ENCODE measurements at regions of chr3 and their contacts with region 1.

Region 1: GRCh38 chr3:5194341-5195159 is 7.0 kb downstream of the EDEM1 start:
- DNase-seq: peak; percentile 68
- ATAC-seq: peak; percentile 52
- H3K4me3 Mint-ChIP-seq: peak overlapping the region; percentile 28
- H3K27ac Mint-ChIP-seq: peak overlapping the region; percentile 93
- H3K4me1 Mint-ChIP-seq: peaks cover 80% of the 10 kb centered on the region
- H3K27me3 Mint-ChIP-seq: no peaks in the 10 kb centered on the region
- CTCF ChIP-seq: no peak

Region 2: DNA sequence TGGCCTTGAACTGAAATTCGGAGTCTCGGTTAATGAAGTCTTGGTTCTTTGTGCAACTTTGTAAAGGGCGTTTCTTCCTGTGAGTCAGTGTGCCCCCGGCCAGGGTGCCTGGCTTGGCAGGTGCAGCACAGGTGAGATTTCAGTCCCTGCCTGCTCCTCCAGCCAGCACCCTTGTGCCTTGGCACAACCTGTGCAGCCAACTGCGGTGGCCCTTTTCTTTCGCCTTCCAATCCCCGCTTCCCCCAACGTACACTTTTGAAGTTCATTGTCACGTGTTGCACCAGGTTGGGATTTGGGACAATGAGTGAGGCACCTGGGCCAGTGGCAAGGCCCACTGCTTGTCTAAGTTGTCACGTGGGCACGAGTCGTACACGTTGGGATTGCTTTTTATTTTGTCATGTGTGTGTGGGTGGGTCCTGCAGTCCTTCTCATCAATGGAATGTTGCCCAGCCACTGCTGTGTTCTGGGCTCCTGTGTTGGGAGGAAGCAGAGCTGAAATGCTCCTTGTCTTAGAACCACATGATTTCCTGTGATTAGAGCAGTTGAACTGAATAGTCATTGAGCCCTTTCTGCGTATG is 458.2 kb before region 1 on chr3:
- CTCF ChIA-PET with region 1: no interaction called
- POLR2A ChIA-PET with region 1: no interaction called
- intact Hi-C with region 1: loop called (anchors 10 kb)
- DNase-seq: no peak
- ATAC-seq: no peak
- H3K4me3 Mint-ChIP-seq: no peak overlapping the region
- H3K27ac Mint-ChIP-seq: peak overlapping the region; percentile 91
- H3K4me1 Mint-ChIP-seq: peaks cover 77% of the 10 kb centered on the region
- H3K27me3 Mint-ChIP-seq: no peaks in the 10 kb centered on the region
- CTCF ChIP-seq: no peak

Region 3: DNA sequence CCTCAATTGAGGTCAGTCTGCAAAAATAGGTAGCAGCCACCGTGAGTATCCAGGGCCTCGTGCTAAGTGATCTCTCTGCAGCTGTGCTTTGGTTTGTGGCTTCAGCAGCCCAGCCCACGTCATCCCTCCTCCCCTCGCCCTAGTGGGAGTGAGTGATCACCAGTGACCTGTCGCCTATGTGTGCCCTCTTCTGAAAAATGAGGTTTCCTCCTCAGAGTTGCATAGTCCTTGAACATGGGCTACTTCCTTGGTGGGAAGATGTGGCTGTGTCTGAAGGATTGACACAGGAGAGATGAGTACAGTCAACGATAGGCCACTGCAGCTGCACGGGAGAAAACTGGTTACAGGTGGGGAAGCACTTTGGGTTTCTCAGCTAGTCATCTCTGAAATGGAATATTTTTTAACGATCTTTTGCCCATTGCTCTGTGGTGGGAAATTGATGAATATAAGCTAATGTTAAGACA is 360.1 kb before region 1 on chr3:
- CTCF ChIA-PET with region 1: no interaction called
- POLR2A ChIA-PET with region 1: interaction called, 3 read pairs
- intact Hi-C with region 1: loop called (anchors 10 kb)
- DNase-seq: peak; percentile 95
- ATAC-seq: peak; percentile 48
- H3K4me3 Mint-ChIP-seq: peak overlapping the region; percentile 63
- H3K27ac Mint-ChIP-seq: peak overlapping the region; percentile 97
- H3K4me1 Mint-ChIP-seq: peaks cover 86% of the 10 kb centered on the region
- H3K27me3 Mint-ChIP-seq: no peaks in the 10 kb centered on the region
- CTCF ChIP-seq: no peak

Region 4: DNA sequence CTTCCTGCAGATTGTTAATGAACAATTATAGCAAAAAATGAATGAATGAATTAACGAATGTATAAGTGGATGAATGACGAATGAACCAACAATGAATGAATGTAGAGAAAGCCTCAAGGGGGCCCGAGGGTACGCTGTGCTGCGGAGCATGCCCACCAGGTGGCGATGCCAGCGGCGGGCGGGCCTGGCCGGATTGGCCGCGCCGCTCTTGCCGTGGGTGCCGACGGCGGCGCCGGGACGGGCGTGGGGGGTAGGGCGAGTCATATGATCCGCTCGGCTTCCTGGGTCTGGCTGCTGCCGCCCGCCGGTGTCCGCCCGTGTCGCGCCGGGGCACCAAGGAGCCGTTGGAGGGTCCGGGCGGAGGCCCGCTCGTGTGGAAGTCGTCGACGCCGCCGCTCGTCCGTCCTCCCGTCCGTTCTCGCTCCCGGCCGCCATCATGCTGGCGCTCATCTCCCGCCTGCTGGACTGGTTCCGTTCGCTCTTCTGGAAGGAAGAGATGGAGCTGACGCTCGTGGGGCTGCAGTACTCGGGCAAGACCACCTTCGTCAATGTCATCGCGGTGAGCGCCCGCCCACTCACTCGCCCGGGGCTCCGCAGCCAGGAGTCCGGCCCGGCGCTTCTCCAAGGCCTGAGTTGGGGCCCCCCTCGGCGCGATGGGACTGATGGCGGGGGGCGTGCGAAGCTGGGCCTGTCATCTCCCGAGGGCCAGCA is 72.4 kb before region 1 on chr3 and contains the start of gene ARL8B:
- CTCF ChIA-PET with region 1: interaction called, 5 read pairs
- POLR2A ChIA-PET with region 1: interaction called, 36 read pairs
- intact Hi-C with region 1: loop called (anchors 5 kb)
- DNase-seq: peak; percentile 95
- ATAC-seq: peak; percentile 97
- H3K4me3 Mint-ChIP-seq: peak within 1 kb of the TSS; percentile 86
- H3K27ac Mint-ChIP-seq: peak within 1 kb of the TSS; percentile 92
- H3K4me1 Mint-ChIP-seq: peaks cover 41% of the 10 kb centered on the region
- H3K27me3 Mint-ChIP-seq: no peaks in the 10 kb centered on the region
- CTCF ChIP-seq: peak; percentile 95
- total RNA-seq, gene ARL8B: 33.9 to 38.9 TPM

Region 5: DNA sequence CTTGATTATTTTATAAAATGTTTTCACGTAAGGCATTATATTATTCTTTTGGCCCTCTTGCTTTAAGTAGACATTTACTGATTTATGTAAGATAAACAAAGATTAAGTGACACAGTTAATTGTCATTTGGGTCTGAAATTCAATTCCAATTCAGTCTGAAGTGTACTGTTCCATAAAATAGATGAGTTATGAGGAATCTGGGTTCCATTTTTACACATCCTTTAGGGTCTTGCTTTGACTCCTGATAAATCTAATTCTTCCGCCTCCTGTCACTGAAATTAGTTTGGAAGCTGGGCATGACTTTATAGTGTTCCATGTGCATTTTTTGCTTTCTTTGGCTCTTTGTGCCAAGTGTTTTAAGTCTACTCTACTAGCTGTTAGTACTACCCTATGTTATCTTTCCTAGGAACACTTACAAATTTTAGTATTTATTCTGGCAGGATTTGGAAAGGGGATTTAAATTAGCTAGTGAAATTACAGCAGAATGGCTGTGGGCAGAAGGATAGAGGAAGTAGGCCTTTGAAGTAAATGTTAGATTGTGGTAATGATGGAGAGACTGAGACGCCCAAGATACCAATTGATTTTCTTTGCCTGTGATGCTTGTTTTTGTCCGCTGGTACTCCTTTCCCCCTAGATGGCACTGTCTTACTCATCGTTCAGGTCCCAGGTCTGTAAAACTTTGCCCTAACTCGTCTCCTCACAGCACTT is 58.2 kb before region 1 on chr3:
- CTCF ChIA-PET with region 1: interaction called, 7 read pairs
- POLR2A ChIA-PET with region 1: interaction called, 3 read pairs
- intact Hi-C with region 1: loop called (anchors 5 kb)
- DNase-seq: peak; percentile 43
- ATAC-seq: peak; percentile 88
- H3K4me3 Mint-ChIP-seq: no peak overlapping the region
- H3K27ac Mint-ChIP-seq: peak overlapping the region; percentile 83
- H3K4me1 Mint-ChIP-seq: peaks cover 63% of the 10 kb centered on the region
- H3K27me3 Mint-ChIP-seq: no peaks in the 10 kb centered on the region
- CTCF ChIP-seq: peak; percentile 59

Region 6: GRCh38 chr3:5151586-5151985 is 43.0 kb before region 1 on chr3:
- CTCF ChIA-PET with region 1: no interaction called
- POLR2A ChIA-PET with region 1: no interaction called
- intact Hi-C with region 1: no loop called
- DNase-seq: no peak
- ATAC-seq: no peak
- H3K4me3 Mint-ChIP-seq: no peak overlapping the region
- H3K27ac Mint-ChIP-seq: no peak overlapping the region
- H3K4me1 Mint-ChIP-seq: peaks cover 64% of the 10 kb centered on the region
- H3K27me3 Mint-ChIP-seq: no peaks in the 10 kb centered on the region
- CTCF ChIP-seq: no peak

Region 7: DNA sequence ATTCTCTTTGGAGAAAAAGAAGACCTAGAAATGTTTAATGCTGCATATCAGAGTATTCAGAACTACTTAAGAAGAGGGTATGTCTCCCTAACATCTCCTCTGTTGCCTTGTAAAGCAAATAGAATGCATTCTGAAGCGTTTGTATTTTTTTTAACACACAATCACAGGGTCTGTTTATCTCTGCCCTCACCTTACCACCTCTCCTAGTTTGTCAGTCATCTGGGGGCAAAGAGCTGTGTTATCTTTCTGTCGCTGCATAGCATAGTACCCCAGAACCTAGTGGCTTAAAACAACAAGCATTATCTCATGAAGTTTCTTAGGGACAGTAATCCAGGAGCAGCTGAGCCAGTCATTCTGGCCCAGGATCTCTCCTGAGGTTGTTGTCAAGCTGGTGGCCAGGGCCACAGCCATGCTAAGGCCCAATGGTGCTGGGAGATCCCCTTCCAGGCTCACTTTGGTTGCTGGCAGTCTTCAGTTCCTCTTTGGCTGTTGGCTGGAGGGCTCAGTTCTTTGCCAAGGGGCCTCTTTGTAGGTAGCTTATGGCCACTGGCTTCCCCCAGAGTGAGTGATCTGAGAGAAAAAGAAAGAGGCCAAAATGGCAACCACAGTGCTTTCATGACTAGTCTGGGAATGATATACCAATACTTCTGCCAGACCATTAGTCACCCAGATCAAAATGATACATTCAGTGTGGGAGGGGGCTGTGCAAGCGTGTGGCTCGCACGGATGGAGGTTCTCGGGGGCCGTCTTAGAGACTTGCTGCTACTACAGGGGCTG is 10.8 kb after region 1 on chr3:
- CTCF ChIA-PET with region 1: interaction called, 3 read pairs
- POLR2A ChIA-PET with region 1: interaction called, 15 read pairs
- intact Hi-C with region 1: no loop called
- DNase-seq: peak; percentile 58
- ATAC-seq: peak; percentile 85
- H3K4me3 Mint-ChIP-seq: no peak overlapping the region
- H3K27ac Mint-ChIP-seq: peak overlapping the region; percentile 81
- H3K4me1 Mint-ChIP-seq: peaks cover 23% of the 10 kb centered on the region
- H3K27me3 Mint-ChIP-seq: no peaks in the 10 kb centered on the region
- CTCF ChIP-seq: no peak

Region 8: DNA sequence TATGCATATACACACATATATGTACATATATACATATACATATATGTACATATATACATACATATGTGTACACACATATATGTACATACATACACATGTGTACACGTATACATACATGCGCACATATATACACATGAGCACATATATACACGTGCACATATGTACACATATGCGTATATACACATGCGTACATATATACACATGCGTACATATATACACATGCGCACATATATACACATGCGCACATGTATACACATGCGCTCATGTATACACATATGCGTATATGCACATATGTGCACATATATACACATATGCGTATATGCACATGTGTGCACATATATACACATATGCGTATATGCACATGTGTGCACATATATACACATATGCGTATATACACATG is 346.0 kb after region 1 on chr3:
- CTCF ChIA-PET with region 1: no interaction called
- POLR2A ChIA-PET with region 1: no interaction called
- intact Hi-C with region 1: no loop called
- DNase-seq: no peak
- ATAC-seq: no peak
- H3K4me3 Mint-ChIP-seq: no peak overlapping the region
- H3K27ac Mint-ChIP-seq: no peak overlapping the region
- H3K4me1 Mint-ChIP-seq: no peaks in the 10 kb centered on the region
- H3K27me3 Mint-ChIP-seq: no peaks in the 10 kb centered on the region
- CTCF ChIP-seq: no peak